Naive thymus-derived CD4-positive, alpha-beta T cell (primary cell): ENCODE measurements at regions of chr3 and their contacts with region 1.

Region 1: DNA sequence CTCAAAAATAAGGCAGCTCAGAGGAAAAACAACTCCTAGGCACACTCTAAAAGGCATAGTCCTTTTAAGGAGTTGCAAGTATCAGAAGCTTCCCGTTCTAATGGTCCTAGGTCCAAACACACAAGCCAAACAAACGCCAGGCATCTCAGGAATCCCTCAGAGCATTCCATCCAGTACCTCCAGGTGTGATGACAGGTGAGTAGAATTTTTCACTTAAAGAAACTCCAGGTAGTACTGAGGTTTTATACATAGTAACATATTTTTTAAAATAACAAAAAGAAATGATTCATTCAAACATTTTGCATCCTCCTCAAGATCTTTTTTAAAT is 1092.3 kb downstream of the TUSC7 start:
- DNase-seq: no peak
- ATAC-seq: no peak
- H3K4me3 ChIP-seq: no peak overlapping the region
- H3K4me3 Mint-ChIP-seq: no peak overlapping the region
- H3K27ac ChIP-seq: no peak overlapping the region
- H3K27ac Mint-ChIP-seq: no peak overlapping the region
- H3K4me1 ChIP-seq: no peaks in the 10 kb centered on the region
- H3K4me1 Mint-ChIP-seq: no peaks in the 10 kb centered on the region
- H3K27me3 ChIP-seq: no peaks in the 10 kb centered on the region
- H3K27me3 Mint-ChIP-seq: no peaks in the 10 kb centered on the region

Region 2: DNA sequence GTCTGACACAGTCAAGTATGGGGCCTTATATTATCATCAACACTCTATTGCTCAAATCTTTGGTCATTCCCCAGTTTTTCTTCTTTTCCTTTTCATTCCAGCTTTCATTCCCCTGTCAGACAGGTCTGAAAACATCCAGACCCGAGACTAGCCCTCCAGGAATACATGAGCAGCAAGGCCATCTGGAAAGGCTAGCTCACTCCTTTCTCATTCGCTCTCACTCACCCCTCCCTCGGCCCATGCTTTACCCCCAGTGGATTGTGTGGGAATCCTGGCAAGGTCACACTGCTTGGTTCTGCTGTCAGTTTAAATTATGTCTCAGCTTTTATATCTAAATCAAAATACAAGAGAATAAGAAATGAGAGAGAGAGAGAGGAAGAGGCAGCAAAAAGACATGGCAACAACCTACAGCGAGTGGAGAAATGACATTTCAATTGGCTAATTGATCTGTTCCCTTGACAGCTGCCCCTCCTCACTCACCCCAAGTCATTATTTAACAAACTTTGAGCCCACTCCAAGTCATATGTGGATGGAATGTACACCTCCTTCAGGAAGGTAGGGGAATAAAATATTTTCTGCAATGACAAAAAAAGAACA is 130.1 kb before region 1 on chr3:
- CTCF ChIA-PET with region 1: no interaction called
- POLR2A ChIA-PET with region 1: no interaction called
- intact Hi-C with region 1: loop called in 1 of 2 experiments (anchors 10 kb)
- DNase-seq: no peak
- ATAC-seq: no peak
- H3K4me3 ChIP-seq: no peak overlapping the region
- H3K4me3 Mint-ChIP-seq: no peak overlapping the region
- H3K27ac ChIP-seq: no peak overlapping the region
- H3K27ac Mint-ChIP-seq: no peak overlapping the region
- H3K4me1 ChIP-seq: no peaks in the 10 kb centered on the region
- H3K4me1 Mint-ChIP-seq: no peaks in the 10 kb centered on the region
- H3K27me3 ChIP-seq: no peaks in the 10 kb centered on the region
- H3K27me3 Mint-ChIP-seq: no peaks in the 10 kb centered on the region

Region 3: DNA sequence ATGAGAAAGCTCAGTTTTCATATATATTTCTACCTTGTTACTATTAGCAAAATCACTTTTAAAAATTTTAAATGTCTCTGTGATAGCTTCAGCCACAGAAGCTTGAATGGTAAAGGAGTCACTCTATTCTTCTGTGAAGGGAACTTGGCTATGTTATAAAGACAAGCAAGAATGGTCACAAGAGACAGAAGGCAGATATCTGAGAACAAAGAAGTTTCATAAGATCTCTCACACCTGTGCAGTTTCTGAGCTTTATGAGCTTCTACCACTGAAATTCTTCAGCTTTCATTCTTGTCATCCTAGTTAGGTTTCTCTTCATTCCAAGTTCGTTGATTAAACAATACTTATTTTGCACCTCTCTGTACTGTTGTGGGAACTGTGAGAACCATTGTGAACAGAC is 379.4 kb after region 1 on chr3:
- CTCF ChIA-PET with region 1: no interaction called
- POLR2A ChIA-PET with region 1: no interaction called
- intact Hi-C with region 1: no loop called
- DNase-seq: no peak
- ATAC-seq: no peak
- H3K4me3 ChIP-seq: no peak overlapping the region
- H3K4me3 Mint-ChIP-seq: no peak overlapping the region
- H3K27ac ChIP-seq: no peak overlapping the region
- H3K27ac Mint-ChIP-seq: no peak overlapping the region
- H3K4me1 ChIP-seq: no peaks in the 10 kb centered on the region
- H3K4me1 Mint-ChIP-seq: no peaks in the 10 kb centered on the region
- H3K27me3 ChIP-seq: no peaks in the 10 kb centered on the region
- H3K27me3 Mint-ChIP-seq: no peaks in the 10 kb centered on the region

Region 4: DNA sequence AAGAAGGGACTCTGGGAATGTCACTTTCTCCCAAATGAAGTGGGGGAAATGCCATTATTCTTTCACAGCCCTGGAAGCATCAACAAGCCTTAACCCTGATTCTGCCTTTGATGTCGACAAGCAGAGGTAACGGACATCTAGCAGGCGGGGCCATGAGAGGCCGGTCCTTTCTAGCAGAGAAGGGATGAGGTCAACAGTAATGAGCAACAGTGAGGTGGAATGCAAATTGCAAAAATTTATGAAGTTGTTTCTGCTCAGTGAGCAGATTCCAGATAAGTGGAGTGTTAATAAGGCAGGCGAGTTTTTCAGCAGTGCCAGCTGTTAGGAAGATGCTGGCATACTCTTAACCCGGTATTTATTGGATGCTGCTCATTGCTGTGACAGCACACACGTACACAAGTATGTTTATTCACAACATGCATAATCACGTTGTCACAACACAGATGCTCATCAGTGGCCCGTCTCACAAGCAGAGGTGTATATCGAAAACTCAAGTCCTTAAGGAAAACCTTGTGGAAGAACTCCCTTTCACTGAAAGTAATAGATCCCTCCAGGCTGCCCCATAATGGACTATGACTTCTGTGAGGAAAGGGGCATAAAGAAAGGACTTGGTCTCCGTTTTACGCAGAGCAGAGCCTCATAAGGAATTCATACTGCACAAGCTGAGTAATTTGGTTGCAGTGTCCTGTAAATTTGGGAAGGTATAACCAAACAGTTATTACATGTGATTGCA is 903.8 kb after region 1 on chr3:
- CTCF ChIA-PET with region 1: no interaction called
- POLR2A ChIA-PET with region 1: no interaction called
- intact Hi-C with region 1: no loop called
- DNase-seq: no peak
- ATAC-seq: no peak
- H3K4me3 ChIP-seq: no peak overlapping the region
- H3K4me3 Mint-ChIP-seq: no peak overlapping the region
- H3K27ac ChIP-seq: no peak overlapping the region
- H3K27ac Mint-ChIP-seq: no peak overlapping the region
- H3K4me1 ChIP-seq: no peaks in the 10 kb centered on the region
- H3K4me1 Mint-ChIP-seq: no peaks in the 10 kb centered on the region
- H3K27me3 ChIP-seq: no peaks in the 10 kb centered on the region
- H3K27me3 Mint-ChIP-seq: peaks cover 0 to 9% (median 0%) of the 10 kb centered on the region in 5 donors